ENCODE measurements at regions of chr10 and their contacts with region 1.

Region 1: GRCh38 chr10:64430690-64431323 is 909.6 kb downstream of the REEP3 start:
- DNase-seq: peak; percentile 74
- H3K4me3 Mint-ChIP-seq: no peak overlapping the region
- H3K27ac Mint-ChIP-seq: no peak overlapping the region
- H3K4me1 Mint-ChIP-seq: peaks cover 8% of the 10 kb centered on the region
- H3K27me3 Mint-ChIP-seq: no peaks in the 10 kb centered on the region
- CTCF ChIP-seq: peak; percentile 79

Region 2: GRCh38 chr10:64041185-64041988 is 389.4 kb before region 1 on chr10:
- CTCF ChIA-PET with region 1: interaction called, 4 read pairs
- intact Hi-C with region 1: loop called (anchors 1 kb)
- DNase-seq: peak; percentile 80
- H3K4me3 Mint-ChIP-seq: peak overlapping the region; percentile 53
- H3K27ac Mint-ChIP-seq: no peak overlapping the region
- H3K4me1 Mint-ChIP-seq: peaks cover 8% of the 10 kb centered on the region
- H3K27me3 Mint-ChIP-seq: peaks cover 3% of the 10 kb centered on the region
- CTCF ChIP-seq: peak; percentile 99

Region 3: GRCh38 chr10:64468219-64468618 is 37.4 kb after region 1 on chr10:
- CTCF ChIA-PET with region 1: interaction called, 3 read pairs
- intact Hi-C with region 1: loop called (anchors 2 kb)
- DNase-seq: peak; percentile 93
- H3K4me3 Mint-ChIP-seq: peak overlapping the region; percentile 52
- H3K27ac Mint-ChIP-seq: peak overlapping the region; percentile 83
- H3K4me1 Mint-ChIP-seq: peaks cover 28% of the 10 kb centered on the region
- H3K27me3 Mint-ChIP-seq: no peaks in the 10 kb centered on the region
- CTCF ChIP-seq: no peak

Region 4: DNA sequence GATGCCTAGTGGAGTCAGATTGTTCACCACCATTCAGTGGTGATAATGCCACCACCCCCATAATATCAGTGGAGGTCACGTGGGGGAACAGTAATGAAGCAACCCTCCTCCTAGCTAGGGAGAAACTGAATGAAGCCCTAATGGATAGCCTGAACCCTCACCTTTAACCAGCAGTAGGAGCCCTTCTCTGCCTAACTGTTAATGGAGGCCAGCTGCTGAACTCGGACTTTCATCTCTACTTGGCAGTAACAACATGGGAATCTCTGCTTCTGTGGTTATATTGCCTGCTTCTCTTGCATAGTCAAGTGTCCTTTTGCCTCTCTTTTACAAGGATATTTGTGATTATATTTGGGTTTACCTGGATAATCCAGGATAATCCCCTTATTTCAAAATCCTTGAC is 188.3 kb after region 1 on chr10:
- CTCF ChIA-PET with region 1: no interaction called
- intact Hi-C with region 1: loop called (anchors 5 kb)
- DNase-seq: no peak
- H3K4me3 Mint-ChIP-seq: no peak overlapping the region
- H3K27ac Mint-ChIP-seq: no peak overlapping the region
- H3K4me1 Mint-ChIP-seq: peaks cover 46% of the 10 kb centered on the region
- H3K27me3 Mint-ChIP-seq: no peaks in the 10 kb centered on the region
- CTCF ChIP-seq: no peak

Region 5: DNA sequence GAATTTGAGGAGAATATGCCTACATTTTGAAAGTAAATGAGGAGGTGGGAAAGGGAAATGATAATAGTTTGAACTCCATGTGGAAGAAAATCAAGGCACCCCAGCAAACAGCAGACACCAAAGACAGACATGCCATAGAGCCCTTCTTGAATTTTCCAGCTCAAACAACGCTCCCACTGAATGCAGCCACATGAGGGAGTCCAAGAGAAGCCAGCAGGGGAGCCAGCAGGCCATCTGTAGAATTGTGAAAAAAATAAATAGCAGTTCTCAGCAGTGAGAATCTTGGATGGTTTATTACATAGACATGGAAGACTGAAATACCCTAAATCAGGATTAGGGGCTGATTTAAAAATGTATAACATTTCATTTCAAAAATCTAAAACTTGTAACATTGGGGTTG is 927.8 kb after region 1 on chr10:
- CTCF ChIA-PET with region 1: no interaction called
- intact Hi-C with region 1: loop called (anchors 5 kb)
- DNase-seq: peak; percentile 46
- H3K4me3 Mint-ChIP-seq: no peak overlapping the region
- H3K27ac Mint-ChIP-seq: no peak overlapping the region
- H3K4me1 Mint-ChIP-seq: no peaks in the 10 kb centered on the region
- H3K27me3 Mint-ChIP-seq: no peaks in the 10 kb centered on the region
- CTCF ChIP-seq: peak; percentile 40